ENCODE measurements at regions of chrX and their contacts with region 1.

Region 1: DNA sequence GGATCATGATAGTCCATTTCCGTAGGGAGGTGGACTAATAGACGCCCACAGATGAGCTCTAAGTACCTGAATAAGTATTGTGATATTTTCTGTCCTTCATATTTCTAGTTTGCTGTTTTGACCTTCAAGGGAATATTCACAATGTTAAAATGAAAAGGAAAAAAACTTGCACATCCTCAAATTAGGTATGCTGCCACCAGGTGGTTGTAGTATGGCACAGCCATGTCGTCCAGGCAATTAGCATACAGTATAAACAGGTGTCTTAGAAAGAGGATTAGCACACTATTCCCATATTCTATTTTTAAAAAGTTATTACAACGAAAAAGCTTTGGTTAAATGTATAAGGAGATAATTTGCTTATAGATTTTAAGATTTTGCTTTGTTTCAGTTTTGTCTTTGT is 802.0 kb downstream of the RPA4 start:
- DNase-seq: no peak
- H3K4me3 ChIP-seq: no peak overlapping the region
- H3K27ac ChIP-seq: no peak overlapping the region
- H3K4me1 ChIP-seq: no peaks in the 10 kb centered on the region
- H3K27me3 ChIP-seq: peaks cover 0 to 36% of the 10 kb centered on the region in 2 donors
- CTCF ChIP-seq: no peak
- POLR2A ChIP-seq: no peak

Region 2: DNA sequence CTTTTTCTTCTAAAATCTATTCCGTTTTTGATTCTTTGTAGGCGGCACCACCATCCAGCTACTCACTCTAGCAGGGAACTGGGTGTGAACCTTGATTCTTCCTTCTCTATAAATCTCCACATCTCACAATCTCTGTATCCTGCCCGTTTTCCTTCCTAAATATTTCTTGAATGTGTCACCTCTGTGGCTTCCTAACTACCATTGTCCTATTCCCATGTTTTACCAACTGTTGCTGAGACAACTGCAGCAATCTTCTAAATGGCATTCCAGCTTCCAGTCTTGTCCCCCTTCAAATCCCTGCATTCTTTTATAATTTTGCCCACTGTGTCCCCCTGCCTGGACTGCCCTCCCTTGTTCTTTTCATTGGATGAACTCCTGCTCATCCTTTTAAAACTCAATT is 160.8 kb before region 1 on chrX:
- intact Hi-C with region 1: no loop called
- DNase-seq: no peak
- H3K4me3 ChIP-seq: no peak overlapping the region
- H3K27ac ChIP-seq: no peak overlapping the region
- H3K4me1 ChIP-seq: no peaks in the 10 kb centered on the region
- H3K27me3 ChIP-seq: peaks cover 0 to 16% of the 10 kb centered on the region in 2 donors
- CTCF ChIP-seq: no peak
- POLR2A ChIP-seq: no peak

Region 3: GRCh38 chrX:97597954-97598353 is 87.8 kb before region 1 on chrX:
- intact Hi-C with region 1: no loop called
- DNase-seq: no peak
- H3K4me3 ChIP-seq: no peak overlapping the region
- H3K27ac ChIP-seq: no peak overlapping the region
- H3K4me1 ChIP-seq: no peaks in the 10 kb centered on the region
- H3K27me3 ChIP-seq: peaks cover 0 to 8% of the 10 kb centered on the region in 2 donors
- CTCF ChIP-seq: no peak
- POLR2A ChIP-seq: no peak

Region 4: GRCh38 chrX:97672138-97672537 is 13.6 kb before region 1 on chrX:
- intact Hi-C with region 1: no loop called
- DNase-seq: no peak
- H3K4me3 ChIP-seq: no peak overlapping the region
- H3K27ac ChIP-seq: no peak overlapping the region
- H3K4me1 ChIP-seq: no peaks in the 10 kb centered on the region
- H3K27me3 ChIP-seq: peaks cover 0 to 18% of the 10 kb centered on the region in 2 donors
- CTCF ChIP-seq: no peak
- POLR2A ChIP-seq: no peak

Region 5: DNA sequence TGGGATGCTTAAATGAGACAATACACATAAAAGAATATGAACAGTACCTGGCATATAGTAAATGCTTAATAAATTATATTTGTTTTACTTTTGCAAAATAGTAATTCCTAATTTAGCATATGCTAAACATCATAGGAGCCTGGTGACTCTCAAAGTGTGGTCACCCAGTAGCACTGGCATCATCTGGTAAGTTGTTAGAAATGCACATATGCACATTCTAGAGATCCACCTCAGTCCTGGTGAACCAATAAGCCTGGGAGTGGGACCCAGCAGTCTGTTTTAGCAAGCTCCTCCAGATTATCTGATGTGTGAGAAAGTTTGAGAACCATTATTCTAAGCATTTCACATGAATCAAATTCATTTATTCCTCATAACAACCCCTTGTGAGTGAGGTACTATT is 28.3 kb after region 1 on chrX:
- intact Hi-C with region 1: no loop called
- DNase-seq: no peak
- H3K4me3 ChIP-seq: no peak overlapping the region
- H3K27ac ChIP-seq: no peak overlapping the region
- H3K4me1 ChIP-seq: no peaks in the 10 kb centered on the region
- H3K27me3 ChIP-seq: peaks cover 0 to 17% of the 10 kb centered on the region in 2 donors
- CTCF ChIP-seq: no peak
- POLR2A ChIP-seq: no peak

Region 6: GRCh38 chrX:98962996-98963395 is 1277.2 kb after region 1 on chrX:
- intact Hi-C with region 1: loop called (anchors 5 kb)
- DNase-seq: no peak
- H3K4me3 ChIP-seq: no peak overlapping the region
- H3K27ac ChIP-seq: no peak overlapping the region
- H3K4me1 ChIP-seq: no peaks in the 10 kb centered on the region
- H3K27me3 ChIP-seq: peaks cover 0 to 18% of the 10 kb centered on the region in 2 donors
- CTCF ChIP-seq: no peak
- POLR2A ChIP-seq: no peak

Measured in breast epithelium (tissue), 4 donors.